ENCODE measurements at regions of chr6 and their contacts with region 1.

Region 1: DNA sequence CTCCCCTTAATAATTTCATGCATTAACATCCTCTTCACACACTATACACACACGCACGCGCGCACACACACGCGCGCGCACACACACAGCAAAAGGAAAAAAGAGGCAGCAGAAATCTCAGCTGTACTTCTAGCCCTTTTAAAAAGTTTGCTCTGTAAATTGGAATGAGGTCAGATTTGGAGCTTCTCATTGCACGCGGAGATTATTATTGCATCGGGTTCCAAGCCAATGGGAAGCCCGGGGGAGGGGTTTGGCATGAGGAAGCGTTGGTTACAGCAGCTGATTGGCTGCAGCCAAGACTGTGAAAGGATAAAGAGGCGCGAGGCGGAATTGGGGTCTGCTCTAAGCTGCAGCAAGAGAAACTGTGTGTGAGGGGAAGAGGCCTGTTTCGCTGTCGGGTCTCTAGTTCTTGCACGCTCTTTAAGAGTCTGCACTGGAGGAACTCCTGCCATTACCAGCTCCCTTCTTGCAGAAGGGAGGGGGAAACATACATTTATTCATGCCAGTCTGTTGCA is at the start of gene SOX4:
- H3K4me3 ChIP-seq: peak within 1 kb of the TSS; percentile 55
- H3K27ac ChIP-seq: peak within 1 kb of the TSS; percentile 99
- H3K4me1 ChIP-seq: peaks cover 12% of the 10 kb centered on the region
- CTCF ChIP-seq: no peak

Region 2: GRCh38 chr6:20564269-20564668 is 1029.2 kb before region 1 on chr6:
- CTCF ChIA-PET with region 1: interaction called, 6 read pairs
- POLR2A ChIA-PET with region 1: interaction called, 24 read pairs
- H3K4me3 ChIP-seq: no peak overlapping the region
- H3K27ac ChIP-seq: no peak overlapping the region
- H3K4me1 ChIP-seq: peaks cover 7% of the 10 kb centered on the region; the same call in 1 of the 2 replicates
- CTCF ChIP-seq: peak; percentile 22; the same call in 1 of the 2 replicates

Region 3: DNA sequence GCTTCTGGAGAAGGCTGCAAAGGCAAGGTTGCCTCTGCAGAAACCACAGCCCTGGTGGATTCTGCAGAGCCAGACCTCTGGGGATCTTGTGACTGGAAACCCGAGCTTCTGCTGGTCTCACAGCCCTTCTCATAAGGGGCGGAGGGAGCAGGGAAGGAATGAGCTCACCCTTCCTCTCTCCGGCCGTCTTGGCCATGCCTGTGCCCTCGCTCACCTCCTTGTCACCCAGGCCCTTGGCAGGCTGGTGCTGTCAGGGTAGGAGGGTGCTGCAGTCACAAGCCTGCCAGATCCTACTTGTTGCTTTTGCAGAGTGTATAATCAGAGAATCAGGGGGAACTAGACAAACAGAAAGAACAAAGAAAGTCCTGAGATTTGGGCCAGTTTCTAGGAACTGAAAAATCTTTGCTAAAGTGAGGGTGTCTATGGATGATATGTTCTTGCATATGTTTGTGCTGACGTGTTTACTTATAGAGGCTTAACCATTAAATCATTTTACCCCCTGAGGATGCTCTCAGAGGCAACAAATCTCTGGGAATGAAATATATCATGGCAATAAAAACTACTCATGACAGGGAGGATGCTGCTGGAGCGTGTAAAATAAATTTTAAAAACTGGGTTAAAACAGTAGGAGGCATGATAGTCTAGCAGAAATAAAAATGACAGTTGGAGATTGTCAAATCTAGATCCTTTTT is 244.8 kb before region 1 on chr6:
- CTCF ChIA-PET with region 1: no interaction called
- POLR2A ChIA-PET with region 1: interaction called, 10 read pairs
- H3K4me3 ChIP-seq: no peak overlapping the region
- H3K27ac ChIP-seq: peak overlapping the region; percentile 71
- H3K4me1 ChIP-seq: peaks cover 15% of the 10 kb centered on the region
- CTCF ChIP-seq: no peak

Region 4: DNA sequence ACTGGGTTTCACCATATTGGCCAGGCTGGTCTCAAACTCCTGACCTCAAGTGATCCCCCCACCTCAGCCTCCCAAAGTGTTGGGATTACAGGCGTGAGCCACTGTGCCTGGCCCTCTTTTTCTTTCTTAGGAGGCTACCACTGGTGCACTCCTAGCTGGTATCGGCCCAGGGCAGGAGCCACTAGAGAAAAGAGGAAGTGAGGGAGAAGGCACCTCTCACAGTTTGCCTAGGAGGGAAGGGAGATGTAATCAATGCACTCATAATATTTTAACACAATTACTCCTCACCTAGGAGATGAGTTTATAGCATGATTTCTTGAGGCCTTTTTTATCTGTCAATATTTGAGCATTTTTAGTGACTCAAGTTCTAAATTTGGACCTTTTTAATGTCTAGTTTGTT is 188.9 kb before region 1 on chr6:
- CTCF ChIA-PET with region 1: no interaction called
- POLR2A ChIA-PET with region 1: no interaction called
- H3K4me3 ChIP-seq: no peak overlapping the region
- H3K27ac ChIP-seq: no peak overlapping the region
- H3K4me1 ChIP-seq: no peaks in the 10 kb centered on the region
- CTCF ChIP-seq: no peak

Region 5: DNA sequence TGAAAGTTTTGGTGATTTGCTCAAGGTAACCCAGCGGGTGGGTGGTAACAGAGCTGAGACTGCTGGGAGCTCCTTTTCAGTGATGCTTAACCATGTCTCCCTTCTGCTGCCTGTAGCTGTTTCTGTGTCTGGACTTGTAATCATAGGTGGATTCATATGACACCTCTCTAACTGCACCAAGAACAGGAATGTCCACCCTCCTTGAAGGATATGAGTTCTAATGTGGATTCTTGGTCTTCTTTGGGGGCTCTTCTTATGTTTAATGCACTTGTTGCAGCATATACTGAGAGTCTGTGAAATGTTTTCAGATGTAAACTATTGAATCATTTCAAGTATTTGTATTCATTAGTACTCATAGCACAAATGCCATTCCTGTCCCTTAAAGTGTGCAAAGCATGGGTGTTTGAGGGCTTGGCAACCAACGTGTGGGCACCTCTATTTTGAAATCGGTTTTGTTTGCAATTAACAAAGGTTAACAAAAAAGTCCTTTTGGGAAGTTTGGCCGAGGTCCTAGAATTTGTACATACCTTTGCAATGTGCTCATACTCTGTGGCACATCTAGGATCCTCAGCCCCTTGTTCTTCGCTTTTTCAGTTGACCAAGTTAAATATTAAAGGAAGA is 138.1 kb after region 1 on chr6:
- CTCF ChIA-PET with region 1: no interaction called
- POLR2A ChIA-PET with region 1: interaction called, 14 read pairs
- H3K4me3 ChIP-seq: no peak overlapping the region
- H3K27ac ChIP-seq: peak overlapping the region; percentile 35; the same call in 1 of the 2 replicates
- H3K4me1 ChIP-seq: peaks cover 19% of the 10 kb centered on the region
- CTCF ChIP-seq: no peak

Region 6: GRCh38 chr6:21800948-21801438 is 207.5 kb after region 1 on chr6:
- CTCF ChIA-PET with region 1: interaction called, 3 read pairs
- POLR2A ChIA-PET with region 1: interaction called, 16 read pairs
- H3K4me3 ChIP-seq: no peak overlapping the region
- H3K27ac ChIP-seq: peak overlapping the region; percentile 13
- H3K4me1 ChIP-seq: peaks cover 19% of the 10 kb centered on the region
- CTCF ChIP-seq: no peak

Region 7: GRCh38 chr6:21953831-21954801 is 360.6 kb after region 1 on chr6:
- CTCF ChIA-PET with region 1: no interaction called
- POLR2A ChIA-PET with region 1: interaction called, 53 read pairs
- H3K4me3 ChIP-seq: no peak overlapping the region
- H3K27ac ChIP-seq: peak overlapping the region; percentile 97
- H3K4me1 ChIP-seq: peaks cover 29% of the 10 kb centered on the region
- CTCF ChIP-seq: no peak

Region 8: GRCh38 chr6:22828179-22829062 is 1235.0 kb after region 1 on chr6:
- CTCF ChIA-PET with region 1: interaction called, 3 read pairs
- POLR2A ChIA-PET with region 1: interaction called, 13 read pairs
- H3K4me3 ChIP-seq: peak overlapping the region; percentile 29
- H3K27ac ChIP-seq: peak overlapping the region; percentile 63
- H3K4me1 ChIP-seq: peaks cover 16% of the 10 kb centered on the region
- CTCF ChIP-seq: 0 out of 2 replicates have a peak, but pooled peaks have one; percentile 16